Posterior vena cava (tissue), 2 donors: ENCODE measurements at regions of chr12 and their contacts with region 1.

Region 1: DNA sequence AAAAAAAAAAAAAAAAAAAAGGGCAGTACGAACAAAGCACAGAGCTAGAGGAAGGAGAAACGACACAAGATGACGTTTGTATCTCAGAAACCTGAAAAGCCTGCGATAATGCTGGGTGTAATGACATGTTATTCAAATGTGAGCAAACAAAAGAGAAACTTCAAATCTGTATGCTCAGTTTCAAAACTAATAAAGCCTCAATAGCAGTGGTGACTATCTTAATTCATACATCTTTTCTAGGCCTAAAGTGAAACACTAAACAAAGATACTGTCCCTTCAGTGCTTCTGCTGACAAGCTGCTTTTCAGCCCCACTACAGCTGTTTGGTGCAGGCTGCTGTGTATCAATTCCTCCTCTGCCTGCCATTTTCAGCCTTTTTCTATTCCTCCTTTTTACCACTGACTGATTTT is 15.8 kb downstream of the ITPR2 start:
- DNase-seq: no peak

Region 2: DNA sequence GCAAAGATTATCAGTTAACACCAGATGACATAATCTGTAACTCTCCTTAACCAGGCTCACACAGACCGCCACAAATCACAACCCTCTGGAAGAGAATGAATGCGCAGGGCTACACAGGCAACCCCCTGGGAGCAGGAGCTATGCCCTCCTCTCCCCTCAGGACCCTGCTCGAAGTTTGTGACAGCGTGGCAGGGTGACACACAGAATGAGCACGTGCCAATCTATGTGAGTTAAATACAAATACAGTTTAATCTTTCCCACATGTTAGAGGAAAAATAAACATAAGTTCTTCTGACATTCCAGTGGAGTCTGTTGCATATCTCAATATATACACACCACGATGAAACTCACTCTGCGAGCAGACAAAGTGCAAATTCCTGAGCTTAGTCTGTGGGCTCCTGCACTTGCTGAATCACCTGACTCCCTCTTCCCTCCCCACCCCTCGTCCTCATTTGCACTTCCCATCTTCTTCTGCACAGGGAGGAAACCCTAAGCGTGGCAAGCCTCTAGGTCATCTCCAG is 1905.9 kb before region 1 on chr12:
- intact Hi-C with region 1: no loop called
- DNase-seq: no peak

Region 3: GRCh38 chr12:26713885-26714383 is 103.3 kb before region 1 on chr12:
- intact Hi-C with region 1: loop called in 1 of 2 experiments (anchors 10 kb)
- DNase-seq: no peak

Region 4: GRCh38 chr12:26783131-26783526 is 34.1 kb before region 1 on chr12:
- intact Hi-C with region 1: loop called in 1 of 2 experiments (anchors 5 kb)
- DNase-seq: no peak

Region 5: GRCh38 chr12:27434673-27435565 is 617.7 kb after region 1 on chr12:
- intact Hi-C with region 1: no loop called
- DNase-seq: no peak